ENCODE measurements at regions of chr7 and their contacts with region 1.

Region 1: GRCh38 chr7:93551063-93551904 is 23.2 kb downstream of the CALCR start:
- DNase-seq: no peak
- H3K4me3 Mint-ChIP-seq: no peak overlapping the region
- H3K27ac Mint-ChIP-seq: no peak overlapping the region
- H3K4me1 Mint-ChIP-seq: no peaks in the 10 kb centered on the region
- H3K27me3 Mint-ChIP-seq: no peaks in the 10 kb centered on the region

Region 2: DNA sequence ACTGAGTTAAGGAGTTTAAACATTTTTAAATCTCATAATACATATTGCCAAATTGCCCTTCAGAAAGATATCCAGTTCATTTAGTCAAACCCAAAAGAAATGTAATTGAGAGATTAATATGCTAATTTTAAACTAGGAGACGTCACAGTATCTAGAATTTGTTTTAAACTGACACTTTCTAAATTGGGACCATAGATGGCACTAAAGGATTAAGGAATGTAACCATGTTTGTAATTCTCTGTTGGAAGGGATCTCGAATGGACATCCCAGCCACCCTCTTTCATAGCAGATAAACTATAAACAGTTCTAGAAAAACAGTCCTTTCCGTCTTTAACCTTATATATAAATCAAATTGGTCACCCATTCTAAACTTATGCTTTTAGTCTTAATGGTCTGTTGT is 373.1 kb before region 1 on chr7:
- CTCF ChIA-PET with region 1: no interaction called
- intact Hi-C with region 1: loop called (anchors 1 kb)
- DNase-seq: no peak
- H3K4me3 Mint-ChIP-seq: no peak overlapping the region
- H3K27ac Mint-ChIP-seq: no peak overlapping the region
- H3K4me1 Mint-ChIP-seq: no peaks in the 10 kb centered on the region
- H3K27me3 Mint-ChIP-seq: peaks cover 24% of the 10 kb centered on the region

Region 3: DNA sequence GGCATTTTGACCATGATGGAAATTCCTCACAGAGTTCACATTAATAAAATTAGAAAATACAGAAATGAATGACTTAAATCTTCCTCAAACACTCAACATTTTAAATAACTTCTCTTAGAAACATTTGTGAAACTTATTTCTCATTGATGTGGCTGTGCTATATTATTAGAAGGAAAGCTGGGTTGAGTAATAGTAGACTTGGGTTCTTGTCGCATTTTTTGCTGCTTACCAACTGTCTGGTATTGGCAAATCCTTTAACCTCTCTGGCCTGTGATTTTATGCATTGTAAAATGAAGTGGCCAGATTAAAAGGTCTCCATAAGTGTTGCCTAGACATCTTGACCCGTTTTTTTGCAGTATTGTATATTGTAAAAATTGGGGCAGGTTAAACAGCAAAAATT is 252.6 kb before region 1 on chr7:
- CTCF ChIA-PET with region 1: no interaction called
- intact Hi-C with region 1: no loop called
- DNase-seq: no peak
- H3K4me3 Mint-ChIP-seq: no peak overlapping the region
- H3K27ac Mint-ChIP-seq: no peak overlapping the region
- H3K4me1 Mint-ChIP-seq: no peaks in the 10 kb centered on the region
- H3K27me3 Mint-ChIP-seq: no peaks in the 10 kb centered on the region

Region 4: GRCh38 chr7:93435797-93436196 is 115.5 kb before region 1 on chr7:
- CTCF ChIA-PET with region 1: no interaction called
- intact Hi-C with region 1: no loop called
- DNase-seq: no peak
- H3K4me3 Mint-ChIP-seq: no peak overlapping the region
- H3K27ac Mint-ChIP-seq: no peak overlapping the region
- H3K4me1 Mint-ChIP-seq: no peaks in the 10 kb centered on the region
- H3K27me3 Mint-ChIP-seq: no peaks in the 10 kb centered on the region

Region 5: DNA sequence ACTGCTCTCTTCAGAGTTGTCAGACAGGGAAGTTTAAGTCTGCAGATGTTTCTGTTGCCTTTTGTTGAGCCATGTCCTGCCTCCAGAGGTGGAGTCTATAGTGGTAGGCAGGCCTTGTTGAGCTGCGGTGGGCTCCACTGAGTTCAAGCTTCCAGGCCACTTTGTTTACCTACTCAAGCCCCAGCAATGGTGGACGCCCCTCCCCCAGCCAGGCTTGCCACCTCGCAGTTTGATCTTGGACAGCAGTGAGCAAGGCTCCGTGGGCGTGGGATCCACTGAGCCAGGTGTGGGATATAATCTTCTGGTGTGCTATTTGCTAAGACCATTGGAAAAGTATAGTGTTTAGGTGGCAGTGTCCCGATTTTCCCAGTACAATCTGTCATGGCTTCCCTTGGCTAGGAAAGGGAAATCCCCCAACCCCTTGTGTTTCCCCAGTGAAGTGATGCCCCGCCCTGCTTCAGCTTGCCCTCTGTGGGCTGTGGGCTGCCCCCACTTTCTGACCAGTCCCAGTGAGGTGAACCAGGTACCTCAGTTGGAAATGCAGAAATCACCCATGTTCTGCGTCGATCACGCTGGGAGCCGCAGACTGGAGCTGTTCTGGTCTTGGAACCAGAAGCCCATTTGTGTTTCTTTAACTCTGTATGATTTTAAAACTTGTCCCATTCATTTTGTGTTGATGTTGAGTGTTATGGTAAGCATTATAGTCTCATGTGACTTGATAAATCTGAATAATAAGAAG is 112.4 kb after region 1 on chr7:
- CTCF ChIA-PET with region 1: no interaction called
- intact Hi-C with region 1: no loop called
- DNase-seq: no peak
- H3K4me3 Mint-ChIP-seq: no peak overlapping the region
- H3K27ac Mint-ChIP-seq: no peak overlapping the region
- H3K4me1 Mint-ChIP-seq: no peaks in the 10 kb centered on the region
- H3K27me3 Mint-ChIP-seq: no peaks in the 10 kb centered on the region

Measured in activated naive CD4-positive, alpha-beta T cell treated with anti-CD3 and anti-CD28 coated beads for 36 hours (primary cell).